CD8-positive, alpha-beta T cell (primary cell): ENCODE measurements at regions of chr16 and their contacts with region 1.

Region 1: GRCh38 chr16:23452572-23453337 is at the start of gene COG7:
- DNase-seq: peak; percentile 62 to 91 (median 83)
- ATAC-seq: peak; percentile 89
- H3K4me3 ChIP-seq: peak within 1 kb of the TSS; percentile 96 to 100
- H3K4me3 Mint-ChIP-seq: peak within 1 kb of the TSS; percentile 95
- H3K27ac ChIP-seq: peak within 1 kb of the TSS; percentile 43 to 66
- H3K27ac Mint-ChIP-seq: peak within 1 kb of the TSS; percentile 89
- H3K4me1 ChIP-seq: peaks cover 17% of the 10 kb centered on the region
- H3K4me1 Mint-ChIP-seq: peaks cover 33% of the 10 kb centered on the region
- H3K27me3 ChIP-seq: no peaks in the 10 kb centered on the region
- H3K27me3 Mint-ChIP-seq: no peaks in the 10 kb centered on the region
- CTCF ChIP-seq: no peak
- total RNA-seq, gene COG7: 13.3 to 14.7 TPM

Region 2: GRCh38 chr16:23149349-23149996 is 303.3 kb before region 1 on chr16 and contains the start of gene USP31:
- CTCF ChIA-PET with region 1: no interaction called
- POLR2A ChIA-PET with region 1: no interaction called
- intact Hi-C with region 1: loop called in 1 of 2 experiments (anchors 5 kb)
- DNase-seq: peak; percentile 76 to 95 (median 87)
- ATAC-seq: peak; percentile 95
- H3K4me3 ChIP-seq: peak within 1 kb of the TSS; percentile 64 to 78
- H3K4me3 Mint-ChIP-seq: peak within 1 kb of the TSS; percentile 94
- H3K27ac ChIP-seq: peak within 1 kb of the TSS; percentile 17 to 37
- H3K27ac Mint-ChIP-seq: peak within 1 kb of the TSS; percentile 64
- H3K4me1 ChIP-seq: peaks cover 10% of the 10 kb centered on the region
- H3K4me1 Mint-ChIP-seq: peaks cover 20% of the 10 kb centered on the region
- H3K27me3 ChIP-seq: no peaks in the 10 kb centered on the region
- H3K27me3 Mint-ChIP-seq: peaks cover 5% of the 10 kb centered on the region
- CTCF ChIP-seq: no peak
- total RNA-seq, gene USP31: 1.6 to 1.8 TPM

Region 3: GRCh38 chr16:23504451-23505179 is 51.9 kb after region 1 on chr16:
- CTCF ChIA-PET with region 1: no interaction called
- POLR2A ChIA-PET with region 1: no interaction called
- intact Hi-C with region 1: loop called in 1 of 2 experiments (anchors 10 kb)
- DNase-seq: peak; percentile 38 to 92 (median 71)
- ATAC-seq: peak; percentile 83
- H3K4me3 ChIP-seq: no peak overlapping the region
- H3K4me3 Mint-ChIP-seq: peak overlapping the region; percentile 45
- H3K27ac ChIP-seq: peak overlapping the region; percentile 16 to 77
- H3K27ac Mint-ChIP-seq: peak overlapping the region; percentile 94
- H3K4me1 ChIP-seq: peaks cover 53% of the 10 kb centered on the region
- H3K4me1 Mint-ChIP-seq: peaks cover 74% of the 10 kb centered on the region
- H3K27me3 ChIP-seq: no peaks in the 10 kb centered on the region
- H3K27me3 Mint-ChIP-seq: no peaks in the 10 kb centered on the region
- CTCF ChIP-seq: no peak

Region 4: GRCh38 chr16:23595951-23596720 is 143.4 kb after region 1 on chr16 and contains the start of gene NDUFAB1:
- CTCF ChIA-PET with region 1: no interaction called
- POLR2A ChIA-PET with region 1: no interaction called
- intact Hi-C with region 1: loop called (anchors 1 to 2 kb)
- DNase-seq: peak; percentile 83 to 94 (median 90)
- ATAC-seq: peak; percentile 100
- H3K4me3 ChIP-seq: peak within 1 kb of the TSS; percentile 81 to 82
- H3K4me3 Mint-ChIP-seq: peak within 1 kb of the TSS; percentile 82
- H3K27ac ChIP-seq: peak within 1 kb of the TSS; percentile 67 to 77
- H3K27ac Mint-ChIP-seq: peak within 1 kb of the TSS; percentile 88
- H3K4me1 ChIP-seq: peaks cover 13% of the 10 kb centered on the region
- H3K4me1 Mint-ChIP-seq: peaks cover 41% of the 10 kb centered on the region
- H3K27me3 ChIP-seq: no peaks in the 10 kb centered on the region
- H3K27me3 Mint-ChIP-seq: no peaks in the 10 kb centered on the region
- CTCF ChIP-seq: peak; percentile 95
- total RNA-seq, gene NDUFAB1: 32.3 to 36.0 TPM

Region 5: DNA sequence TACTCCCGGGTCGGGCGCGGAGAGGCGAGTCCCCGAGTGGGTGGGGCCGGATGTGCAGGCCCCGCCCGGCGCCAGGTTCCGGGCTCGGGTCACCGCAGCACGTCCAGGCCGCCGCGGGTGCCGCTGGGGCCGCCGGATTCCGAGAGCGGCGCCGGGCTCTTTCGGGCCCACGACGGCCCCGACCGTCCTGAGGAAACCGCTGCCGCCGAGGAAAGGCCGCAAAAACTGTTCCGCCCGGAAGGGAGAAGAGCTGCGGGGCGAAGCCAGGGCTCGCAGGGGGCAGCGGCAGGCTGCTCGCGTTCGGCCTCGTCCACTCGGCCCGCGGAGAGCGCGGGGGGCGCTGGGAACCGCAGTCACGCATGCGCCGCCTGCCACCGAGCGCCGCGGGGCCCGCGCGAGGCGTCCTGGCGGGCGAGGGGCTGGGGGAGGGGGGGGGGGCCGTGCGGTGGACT is 1804.8 kb after region 1 on chr16 and contains the start of gene ZKSCAN2:
- CTCF ChIA-PET with region 1: no interaction called
- POLR2A ChIA-PET with region 1: no interaction called
- intact Hi-C with region 1: loop called in 1 of 2 experiments (anchors 5 kb)
- DNase-seq: peak; percentile 57 to 90 (median 77)
- ATAC-seq: peak; percentile 79
- H3K4me3 ChIP-seq: peak within 1 kb of the TSS; percentile 68 to 86
- H3K4me3 Mint-ChIP-seq: peak within 1 kb of the TSS; percentile 96
- H3K27ac ChIP-seq: peak within 1 kb of the TSS; percentile 79 to 94
- H3K27ac Mint-ChIP-seq: peak within 1 kb of the TSS; percentile 95
- H3K4me1 ChIP-seq: peaks cover 38% of the 10 kb centered on the region
- H3K4me1 Mint-ChIP-seq: peaks cover 62% of the 10 kb centered on the region
- H3K27me3 ChIP-seq: no peaks in the 10 kb centered on the region
- H3K27me3 Mint-ChIP-seq: no peaks in the 10 kb centered on the region
- CTCF ChIP-seq: no peak
- total RNA-seq, gene ZKSCAN2: 9.3 to 9.4 TPM